MCF 10A (cell line): ENCODE measurements at regions of chr18 and their contacts with region 1.

Region 1: DNA sequence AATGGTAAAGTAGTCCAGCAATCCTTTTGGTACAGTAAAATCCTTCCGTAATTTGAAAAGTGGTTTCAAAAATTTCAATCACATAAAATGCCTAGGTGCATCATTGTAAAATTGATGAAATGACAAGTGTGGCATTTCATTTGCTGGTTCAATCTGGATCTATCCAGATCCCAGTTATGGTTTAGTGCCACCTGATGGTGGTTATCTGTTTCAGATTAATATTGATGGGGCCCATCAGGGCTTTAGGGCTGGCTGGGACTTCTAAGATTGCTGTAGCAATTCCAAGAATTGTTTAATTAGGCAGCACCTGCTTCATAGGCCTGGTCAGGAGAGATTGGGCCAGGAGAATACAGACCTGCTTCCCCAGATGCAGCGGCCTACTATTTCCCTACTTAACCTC is 55.5 kb upstream of the PIK3C3 start:
- DNase-seq: peak; percentile 8
- H3K4me3 Mint-ChIP-seq: no peak overlapping the region
- H3K27ac Mint-ChIP-seq: no peak overlapping the region
- H3K4me1 Mint-ChIP-seq: no peaks in the 10 kb centered on the region
- H3K27me3 Mint-ChIP-seq: no peaks in the 10 kb centered on the region
- CTCF ChIP-seq: peak; percentile 8

Region 2: GRCh38 chr18:41767960-41768359 is 131.6 kb before region 1 on chr18:
- CTCF ChIA-PET with region 1: interaction called, 14 read pairs
- POLR2A ChIA-PET with region 1: no interaction called
- intact Hi-C with region 1: no loop called
- DNase-seq: peak; percentile 59
- H3K4me3 Mint-ChIP-seq: no peak overlapping the region
- H3K27ac Mint-ChIP-seq: no peak overlapping the region
- H3K4me1 Mint-ChIP-seq: peaks cover under 1% of the 10 kb centered on the region
- H3K27me3 Mint-ChIP-seq: no peaks in the 10 kb centered on the region
- CTCF ChIP-seq: peak; percentile 19